Pancreas (tissue), 10 donors: ENCODE measurements at regions of chr20 and their contacts with region 1.

Region 1: GRCh38 chr20:9474835-9475415 is 39.5 kb upstream of the LAMP5 start:
- DNase-seq: no peak
- ATAC-seq: no peak
- H3K4me3 ChIP-seq: no peak overlapping the region
- H3K27ac ChIP-seq: no peak overlapping the region
- H3K4me1 ChIP-seq: no peaks in the 10 kb centered on the region
- H3K27me3 ChIP-seq: no peaks in the 10 kb centered on the region
- CTCF ChIP-seq: no peak

Region 2: DNA sequence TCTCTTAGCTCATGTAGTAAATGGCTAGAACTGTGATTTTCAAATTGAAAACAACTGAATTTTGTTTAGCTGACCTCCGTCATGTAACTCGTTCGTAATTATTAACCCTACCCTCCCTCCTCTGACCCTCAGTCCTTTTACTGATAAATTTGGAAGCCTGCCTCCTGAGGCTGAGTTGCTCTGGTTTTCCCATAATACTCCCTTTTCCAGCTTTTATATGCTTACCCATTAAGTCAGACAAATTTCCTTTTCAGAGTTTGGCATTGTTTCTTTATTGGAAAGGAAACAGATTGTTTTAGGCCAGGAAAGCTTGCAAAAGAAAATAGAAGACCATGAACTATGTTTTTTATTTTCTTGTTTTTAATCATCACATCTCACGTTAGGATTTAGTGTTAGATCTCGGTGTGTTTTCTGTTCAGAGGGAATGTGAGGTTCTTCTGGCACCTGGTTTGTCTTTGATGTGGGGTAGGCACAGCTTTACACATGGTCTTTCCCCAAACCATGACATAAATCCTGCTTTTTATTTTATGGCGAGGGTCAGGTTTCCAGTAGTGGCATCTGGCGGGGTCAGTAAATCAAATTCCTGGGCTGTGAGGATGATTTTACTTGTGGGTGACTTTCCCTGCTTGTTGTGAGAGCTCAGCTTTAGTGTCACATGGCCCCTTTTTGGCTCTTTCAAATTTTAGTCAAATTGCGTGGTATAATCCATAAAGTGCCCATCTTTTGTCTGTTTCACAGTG is 381.5 kb before region 1 on chr20:
- intact Hi-C with region 1: no loop called
- DNase-seq: no peak
- ATAC-seq: no peak
- H3K4me3 ChIP-seq: no peak overlapping the region
- H3K27ac ChIP-seq: no peak overlapping the region
- H3K4me1 ChIP-seq: no peaks in the 10 kb centered on the region
- H3K27me3 ChIP-seq: no peaks in the 10 kb centered on the region
- CTCF ChIP-seq: no peak

Region 3: DNA sequence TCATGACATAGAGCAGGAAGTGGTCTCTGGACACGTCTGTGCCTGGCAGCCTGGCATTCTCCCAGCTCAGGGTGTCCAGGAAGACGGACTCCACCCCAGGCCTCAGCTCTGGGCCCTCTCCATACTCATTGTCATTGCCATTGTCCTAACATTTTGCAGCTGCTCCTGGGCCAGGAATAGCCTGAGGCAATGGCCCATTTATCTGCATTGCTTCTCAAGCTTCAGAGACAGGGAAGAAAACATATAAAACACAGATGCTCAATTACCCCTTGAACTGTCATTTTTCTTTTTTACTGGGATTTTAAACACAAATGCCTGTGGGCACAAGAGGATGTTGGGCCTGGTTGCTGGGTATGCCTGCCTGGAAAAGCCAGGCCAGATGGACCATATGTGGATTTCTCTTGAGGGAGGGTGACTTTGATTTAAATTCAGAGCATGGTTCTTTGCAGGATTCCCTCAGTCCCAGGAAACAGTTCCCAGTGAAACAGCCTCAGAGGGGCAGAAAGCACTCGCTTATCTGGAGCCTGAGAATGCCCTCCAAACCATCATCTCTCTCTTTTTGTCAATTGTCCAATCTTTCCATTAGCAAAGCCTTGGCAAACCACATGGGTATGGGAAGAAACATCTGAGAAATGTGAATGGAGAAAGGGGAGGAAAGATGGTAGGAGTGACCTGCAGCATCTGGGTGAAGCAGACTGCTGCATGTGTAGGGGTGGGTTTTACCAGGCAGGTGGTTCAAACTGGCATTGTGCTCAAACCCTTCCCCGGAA is 57.3 kb after region 1 on chr20:
- intact Hi-C with region 1: loop called in 1 of 3 experiments (anchors 10 kb)
- DNase-seq: no peak
- ATAC-seq: no peak
- H3K4me3 ChIP-seq: no peak overlapping the region
- H3K27ac ChIP-seq: no peak overlapping the region
- H3K4me1 ChIP-seq: no peaks in the 10 kb centered on the region
- H3K27me3 ChIP-seq: no peaks in the 10 kb centered on the region
- CTCF ChIP-seq: no peak